ENCODE measurements at regions of chr17 and their contacts with region 1.

Region 1: DNA sequence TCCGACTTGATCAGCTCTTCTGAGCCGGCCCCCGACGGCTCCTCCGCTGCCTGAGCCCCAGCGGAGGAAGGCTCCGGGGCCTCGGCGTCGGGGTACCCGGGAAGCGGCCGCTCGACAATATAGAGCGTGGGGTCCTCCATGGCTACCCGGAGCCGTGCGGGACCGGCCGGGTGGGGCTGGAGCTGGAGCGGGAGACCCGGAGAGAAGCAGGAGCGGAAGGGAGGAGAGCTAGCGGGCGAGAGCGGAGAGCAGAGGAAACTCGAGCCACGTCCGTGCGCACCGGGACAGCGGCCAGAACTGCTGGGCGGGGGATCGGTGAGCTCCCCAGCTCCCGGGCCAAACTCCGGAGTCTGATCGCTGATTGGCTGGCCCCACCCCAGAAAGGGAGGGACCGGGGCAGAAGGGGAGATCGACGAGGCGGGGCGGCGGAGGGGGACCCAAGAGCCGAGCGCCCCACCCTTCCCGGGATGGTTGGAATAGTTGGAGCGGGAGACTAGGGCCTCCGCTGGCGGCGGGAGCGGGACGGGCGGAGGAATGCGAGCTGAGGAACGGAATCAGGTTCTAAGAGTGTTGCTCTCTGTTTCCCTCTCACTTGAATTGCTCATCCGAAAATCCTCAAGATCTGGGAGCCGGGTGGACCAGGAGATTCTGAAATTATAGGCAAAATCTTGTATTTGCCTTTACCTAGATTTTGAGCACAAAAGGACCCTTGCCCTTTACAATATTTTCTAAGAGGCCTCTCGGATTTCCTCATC is at the start of gene CAVIN1:
- DNase-seq: peak; percentile 96 to 98 (median 97)
- ATAC-seq: peak; percentile 90
- H3K4me3 ChIP-seq: peak within 1 kb of the TSS; percentile 68 to 69
- H3K27ac ChIP-seq: peak within 1 kb of the TSS; percentile 89 to 91
- H3K4me1 ChIP-seq: peaks cover 8 to 56% of the 10 kb centered on the region in 2 donors
- H3K27me3 ChIP-seq: peaks cover 0 to 51% of the 10 kb centered on the region in 2 donors
- CTCF ChIP-seq: no peak
- polyA plus RNA-seq, gene CAVIN1: 163 to 224 (median 191) TPM

Region 2: GRCh38 chr17:42517516-42517915 is 94.4 kb after region 1 on chr17:
- intact Hi-C with region 1: loop called in 1 of 2 experiments (anchors 5 kb)
- DNase-seq: peak; percentile 24 to 93 (median 78)
- ATAC-seq: peak; percentile 78
- H3K4me3 ChIP-seq: no peak overlapping the region
- H3K27ac ChIP-seq: peak overlapping the region; percentile 83 to 93
- H3K4me1 ChIP-seq: peaks cover 54 to 58% of the 10 kb centered on the region in 2 donors
- H3K27me3 ChIP-seq: no peaks in the 10 kb centered on the region
- CTCF ChIP-seq: peak; percentile 90 to 97

Measured in left lung (tissue), 14 donors.